PC-3 (cell line): ENCODE measurements at regions of chr15 and their contacts with region 1.

Region 1: GRCh38 chr15:67065444-67066093 is at the start of gene SMAD3:
- DNase-seq: peak; percentile 90
- ATAC-seq: peak; percentile 76
- H3K4me3 ChIP-seq: peak within 1 kb of the TSS; percentile 100
- H3K27ac ChIP-seq: peak within 1 kb of the TSS; percentile 73
- H3K4me1 ChIP-seq: peaks cover 31% of the 10 kb centered on the region
- H3K27me3 ChIP-seq: no peaks in the 10 kb centered on the region
- CTCF ChIP-seq: no peak
- total RNA-seq, gene SMAD3: 75.6 and 86.4 TPM in 2 replicates

Region 2: DNA sequence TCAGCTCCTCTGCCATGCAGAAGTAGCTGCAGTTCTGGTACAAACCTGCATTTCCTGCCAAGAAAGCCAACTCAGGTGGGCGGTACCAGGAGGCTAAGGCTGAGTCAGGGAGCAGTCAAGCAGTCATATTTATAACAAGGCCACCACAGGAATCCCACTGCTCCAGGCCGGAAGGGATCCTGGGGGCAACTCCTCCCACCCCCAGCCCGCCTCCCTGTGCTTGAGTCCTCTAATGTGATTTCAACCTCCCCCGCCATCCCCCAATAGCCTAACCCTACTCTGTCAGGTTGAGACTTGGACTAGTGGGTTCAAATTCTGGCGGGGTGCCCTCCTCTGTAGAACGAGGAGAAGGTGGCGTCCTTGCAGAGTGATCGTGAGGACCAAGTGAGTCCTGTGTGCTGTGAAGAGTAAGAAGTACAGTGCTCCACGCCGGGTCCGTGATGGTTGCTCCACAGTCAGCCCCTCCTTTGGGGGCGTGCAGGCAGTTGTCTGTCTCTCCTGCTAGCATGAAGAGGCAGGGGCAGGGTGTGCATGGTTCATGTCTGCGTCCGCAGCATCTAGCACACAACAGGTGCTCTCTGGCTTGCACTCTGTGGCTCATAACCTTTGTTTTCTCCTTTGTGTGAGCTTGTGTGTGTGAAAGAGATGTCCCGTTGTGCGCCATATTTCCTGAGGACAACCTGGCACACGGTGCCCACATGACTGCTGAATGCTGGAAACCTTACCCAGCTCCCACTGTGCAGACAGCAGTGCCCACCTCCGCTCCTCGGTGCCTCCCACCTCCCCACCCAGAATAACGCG is 285.2 kb before region 1 on chr15:
- CTCF ChIA-PET with region 1: no interaction called
- POLR2A ChIA-PET with region 1: no interaction called
- intact Hi-C with region 1: no loop called
- DNase-seq: peak; percentile 84
- ATAC-seq: peak; percentile 89
- H3K4me3 ChIP-seq: no peak overlapping the region
- H3K27ac ChIP-seq: peak overlapping the region; percentile 58
- H3K4me1 ChIP-seq: peaks cover 27% of the 10 kb centered on the region
- H3K27me3 ChIP-seq: no peaks in the 10 kb centered on the region
- CTCF ChIP-seq: no peak

Region 3: GRCh38 chr15:66946578-66947164 is 118.9 kb before region 1 on chr15:
- CTCF ChIA-PET with region 1: no interaction called
- POLR2A ChIA-PET with region 1: interaction called, 3 read pairs
- intact Hi-C with region 1: loop called (anchors 2 kb)
- DNase-seq: peak; percentile 79
- ATAC-seq: peak; percentile 59
- H3K4me3 ChIP-seq: peak overlapping the region; percentile 26; the same call in 1 of the 2 replicates
- H3K27ac ChIP-seq: no peak overlapping the region
- H3K4me1 ChIP-seq: peaks cover 26% of the 10 kb centered on the region
- H3K27me3 ChIP-seq: no peaks in the 10 kb centered on the region
- CTCF ChIP-seq: peak; percentile 82

Region 4: DNA sequence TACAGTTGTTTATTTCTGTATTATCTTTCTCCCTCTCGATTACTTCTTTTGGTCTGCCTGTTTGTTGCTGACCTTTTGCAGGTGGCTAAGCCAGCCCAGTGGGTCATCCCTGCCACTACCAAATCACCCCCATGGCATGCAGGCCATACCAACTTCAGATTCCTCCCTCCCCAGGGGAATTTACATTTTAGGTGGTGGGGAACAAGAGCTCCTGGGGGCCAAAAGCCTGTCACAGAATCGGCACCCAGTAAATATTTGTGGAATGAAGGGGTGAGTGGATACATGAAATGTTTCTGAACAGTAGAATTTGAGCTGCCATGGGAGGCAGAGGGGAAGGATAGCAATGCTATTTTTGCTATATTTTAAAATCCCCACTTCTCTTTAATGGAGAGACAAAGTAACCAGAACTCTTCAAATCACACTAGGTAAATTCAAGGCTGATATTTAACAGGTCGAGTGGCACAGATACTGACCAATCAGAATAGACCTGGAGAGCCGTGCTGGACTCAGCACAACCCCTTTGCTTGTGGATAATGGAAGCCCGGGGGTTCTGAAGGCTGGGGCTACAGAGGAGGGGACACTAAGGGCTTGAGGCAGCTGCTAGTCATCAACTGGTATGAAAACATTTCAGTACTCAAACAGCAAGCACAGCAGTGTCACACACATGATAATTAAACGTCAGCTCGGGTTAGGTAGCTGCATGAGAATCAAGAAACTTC is 54.5 kb before region 1 on chr15:
- CTCF ChIA-PET with region 1: no interaction called
- POLR2A ChIA-PET with region 1: no interaction called
- intact Hi-C with region 1: no loop called
- DNase-seq: no peak
- ATAC-seq: no peak
- H3K4me3 ChIP-seq: no peak overlapping the region
- H3K27ac ChIP-seq: no peak overlapping the region
- H3K4me1 ChIP-seq: no peaks in the 10 kb centered on the region
- H3K27me3 ChIP-seq: no peaks in the 10 kb centered on the region
- CTCF ChIP-seq: no peak

Region 5: GRCh38 chr15:67024314-67024997 is 41.1 kb before region 1 on chr15:
- CTCF ChIA-PET with region 1: no interaction called
- POLR2A ChIA-PET with region 1: no interaction called
- intact Hi-C with region 1: loop called (anchors 5 kb)
- DNase-seq: peak; percentile 90
- ATAC-seq: peak; percentile 70
- H3K4me3 ChIP-seq: peak overlapping the region; percentile 29
- H3K27ac ChIP-seq: peak overlapping the region; percentile 86
- H3K4me1 ChIP-seq: peaks cover 57% of the 10 kb centered on the region
- H3K27me3 ChIP-seq: no peaks in the 10 kb centered on the region
- CTCF ChIP-seq: no peak

Region 6: GRCh38 chr15:67109141-67110034 is 43.8 kb after region 1 on chr15:
- CTCF ChIA-PET with region 1: no interaction called
- POLR2A ChIA-PET with region 1: interaction called, 4 read pairs
- intact Hi-C with region 1: loop called (anchors 5 kb)
- DNase-seq: no peak
- ATAC-seq: no peak
- H3K4me3 ChIP-seq: no peak overlapping the region
- H3K27ac ChIP-seq: peak overlapping the region; percentile 99
- H3K4me1 ChIP-seq: peaks cover 57% of the 10 kb centered on the region
- H3K27me3 ChIP-seq: no peaks in the 10 kb centered on the region
- CTCF ChIP-seq: no peak

Region 7: DNA sequence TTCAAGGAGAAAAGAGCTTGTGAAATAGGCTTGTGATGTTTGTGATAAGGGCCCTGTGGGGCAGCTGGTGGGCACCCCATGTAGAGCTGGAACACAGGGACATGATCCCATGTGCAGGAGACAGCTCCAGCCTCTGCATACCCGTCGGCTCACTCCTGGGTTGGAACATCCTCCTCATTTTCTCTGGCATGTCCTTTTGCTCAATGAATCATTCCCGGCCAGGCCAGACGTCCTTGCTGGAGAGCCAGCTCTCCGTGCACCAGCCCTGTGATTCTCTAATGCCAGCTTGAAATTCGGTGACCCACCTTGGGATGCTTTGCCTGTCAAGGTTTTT is 77.2 kb after region 1 on chr15:
- CTCF ChIA-PET with region 1: no interaction called
- POLR2A ChIA-PET with region 1: no interaction called
- intact Hi-C with region 1: loop called (anchors 2 kb)
- DNase-seq: peak; percentile 51
- ATAC-seq: peak; percentile 37
- H3K4me3 ChIP-seq: no peak overlapping the region
- H3K27ac ChIP-seq: peak overlapping the region; percentile 100
- H3K4me1 ChIP-seq: peaks cover 81% of the 10 kb centered on the region
- H3K27me3 ChIP-seq: no peaks in the 10 kb centered on the region
- CTCF ChIP-seq: no peak

Region 8: DNA sequence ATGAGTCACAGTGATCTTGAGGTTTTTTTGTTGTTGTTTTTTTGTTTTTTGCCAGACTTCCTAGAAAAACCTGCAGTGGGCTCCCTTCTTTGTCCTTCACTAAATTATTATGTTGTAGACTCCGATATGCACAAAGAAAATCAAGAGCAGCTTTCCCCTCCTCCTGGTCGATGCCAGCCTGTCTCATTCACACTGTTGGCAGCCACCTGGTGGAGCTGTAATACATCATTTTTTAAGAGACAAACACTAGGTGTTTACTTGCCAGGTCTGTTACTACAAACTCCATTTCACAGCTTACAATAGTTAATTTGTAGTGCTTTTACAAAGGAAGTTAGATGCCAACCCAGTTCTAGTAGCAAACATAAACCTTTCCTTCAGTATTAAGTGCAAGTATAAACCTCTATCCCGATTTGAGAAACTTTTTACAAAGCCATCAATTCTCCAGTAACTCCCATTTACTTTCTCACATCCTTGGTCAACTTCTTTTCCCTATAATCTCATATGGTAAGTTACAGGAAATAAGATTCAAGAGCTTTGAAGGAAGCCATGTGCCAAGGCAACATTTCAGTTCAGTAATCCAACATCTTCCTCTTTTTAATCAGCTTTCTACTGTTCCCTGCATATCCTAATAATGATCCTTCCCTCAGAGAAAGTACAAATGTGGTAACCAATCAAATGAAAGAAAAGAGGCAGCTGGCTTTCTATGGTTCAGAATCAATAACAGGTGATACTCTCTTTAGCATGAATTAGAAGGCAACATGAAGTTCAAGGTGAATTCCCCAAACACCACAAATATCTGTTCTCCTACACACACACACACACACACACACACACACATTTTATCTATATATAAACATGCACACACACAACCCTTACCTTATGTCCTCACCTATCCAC is 174.9 kb after region 1 on chr15:
- CTCF ChIA-PET with region 1: no interaction called
- POLR2A ChIA-PET with region 1: no interaction called
- intact Hi-C with region 1: loop called (anchors 10 kb)
- DNase-seq: peak; percentile 40
- ATAC-seq: peak; percentile 73
- H3K4me3 ChIP-seq: no peak overlapping the region
- H3K27ac ChIP-seq: no peak overlapping the region
- H3K4me1 ChIP-seq: peaks cover 21% of the 10 kb centered on the region; the same call in 1 of the 2 replicates
- H3K27me3 ChIP-seq: no peaks in the 10 kb centered on the region
- CTCF ChIP-seq: peak; percentile 72

Region 9: GRCh38 chr15:67303490-67304363 is 238.2 kb after region 1 on chr15:
- CTCF ChIA-PET with region 1: no interaction called
- POLR2A ChIA-PET with region 1: no interaction called
- intact Hi-C with region 1: loop called (anchors 2 kb)
- DNase-seq: peak; percentile 58
- ATAC-seq: peak; percentile 58; the same call in 1 of the 2 replicates
- H3K4me3 ChIP-seq: no peak overlapping the region
- H3K27ac ChIP-seq: no peak overlapping the region
- H3K4me1 ChIP-seq: no peaks in the 10 kb centered on the region
- H3K27me3 ChIP-seq: no peaks in the 10 kb centered on the region
- CTCF ChIP-seq: peak; percentile 75